GM10248 (cell line): ENCODE measurements at regions of chr16 and their contacts with region 1.

Region 1: GRCh38 chr16:57462209-57462977 is at the start of gene POLR2C:
- DNase-seq: peak; percentile 94
- CTCF ChIP-seq: peak; percentile 98

Region 2: GRCh38 chr16:56964243-56965148 is 497.9 kb before region 1 on chr16:
- CTCF ChIA-PET with region 1: no interaction called
- POLR2A ChIA-PET with region 1: no interaction called
- DNase-seq: peak; percentile 90
- CTCF ChIP-seq: peak; percentile 99

Region 3: GRCh38 chr16:57447186-57447962 is 15.0 kb before region 1 on chr16 and contains the starts of genes CIAPIN1 and COQ9:
- CTCF ChIA-PET with region 1: interaction called, 112 read pairs
- POLR2A ChIA-PET with region 1: interaction called, 9 read pairs
- DNase-seq: peak; percentile 98
- CTCF ChIP-seq: no peak

Region 4: GRCh38 chr16:57475711-57476339 is 13.4 kb after region 1 on chr16:
- CTCF ChIA-PET with region 1: interaction called, 55 read pairs
- POLR2A ChIA-PET with region 1: interaction called, 3 read pairs
- DNase-seq: peak; percentile 89
- CTCF ChIP-seq: peak; percentile 49

Region 5: DNA sequence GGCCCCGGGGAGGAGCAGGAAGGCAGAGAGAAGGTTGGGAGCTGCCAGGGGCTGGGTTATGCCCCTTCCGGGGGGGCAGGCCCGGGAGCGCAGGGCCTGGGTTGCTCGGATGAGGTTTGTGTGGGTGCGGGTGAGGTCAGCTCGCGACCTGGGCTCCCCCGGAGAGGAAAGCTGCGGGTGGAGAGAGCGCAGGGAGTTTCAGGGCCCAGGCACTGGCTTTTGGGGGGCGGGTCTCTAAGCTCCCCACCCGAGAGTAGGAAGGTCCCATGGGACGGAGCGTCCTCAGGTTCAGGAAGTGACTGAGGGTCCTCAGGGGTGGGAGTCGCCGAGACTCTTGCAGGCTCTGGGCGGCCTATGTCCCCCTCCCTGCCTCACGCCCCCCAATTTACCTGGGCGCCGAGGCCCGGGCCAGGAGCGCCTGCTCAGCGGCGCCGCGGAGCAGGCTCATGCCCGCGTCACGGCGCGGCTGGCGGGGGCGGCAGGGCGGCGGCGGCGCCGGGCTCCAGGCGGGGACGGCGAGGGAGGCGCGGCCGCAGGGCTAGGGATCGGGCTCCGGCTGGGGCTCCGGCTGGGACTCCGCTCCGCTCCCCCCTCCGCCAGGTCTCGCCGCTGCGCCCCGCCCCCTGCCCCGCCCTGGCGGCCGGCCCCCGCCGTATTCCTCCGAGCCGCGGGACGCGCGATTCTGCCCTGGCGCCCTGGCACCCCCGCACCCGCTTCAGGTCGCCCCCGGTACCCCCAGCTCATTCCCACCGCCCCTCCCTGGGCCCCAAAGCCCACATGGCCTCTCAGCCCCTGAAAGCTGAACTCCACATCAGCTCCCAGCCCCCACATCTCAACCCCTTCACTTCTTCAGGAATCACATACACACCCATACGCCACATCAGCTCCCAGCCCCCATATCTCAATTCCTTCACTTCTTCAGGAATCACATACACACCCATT is 23.8 kb after region 1 on chr16 and contains the start of gene DOK4:
- CTCF ChIA-PET with region 1: interaction called, 13 read pairs
- POLR2A ChIA-PET with region 1: no interaction called
- DNase-seq: peak; percentile 95
- CTCF ChIP-seq: no peak

Region 6: DNA sequence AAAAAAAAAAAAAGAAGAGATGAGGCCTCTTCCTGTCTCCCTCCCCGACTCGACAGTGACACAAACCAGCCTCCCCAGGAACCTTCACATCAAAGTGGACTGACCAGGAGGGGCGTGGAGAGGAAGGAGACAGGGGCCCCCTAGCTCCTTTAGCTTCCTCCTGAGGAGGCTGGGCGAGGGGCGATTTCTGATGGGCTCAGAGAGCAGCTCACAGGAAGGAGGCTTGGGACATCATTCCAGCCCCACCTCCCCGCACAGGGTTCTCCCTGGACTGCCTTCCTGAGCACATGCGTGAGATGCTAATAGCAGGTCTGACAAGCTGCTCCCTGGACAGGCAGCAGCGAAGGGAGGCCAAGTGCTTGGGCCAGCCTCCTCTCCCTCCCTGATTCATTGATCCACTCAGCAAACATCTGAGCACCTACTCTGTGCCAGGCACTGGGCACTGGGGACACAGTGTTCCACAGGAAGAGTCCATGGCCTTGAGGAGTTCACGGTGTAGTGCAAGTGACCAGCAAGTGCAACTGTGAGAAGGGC is 38.3 kb after region 1 on chr16:
- CTCF ChIA-PET with region 1: interaction called, 12 read pairs
- POLR2A ChIA-PET with region 1: no interaction called
- DNase-seq: no peak
- CTCF ChIP-seq: no peak